Activated naive CD4-positive, alpha-beta T cell treated with anti-CD3 and anti-CD28 coated beads for 36 hours (primary cell): ENCODE measurements at regions of chr19 and their contacts with region 1.

Region 1: DNA sequence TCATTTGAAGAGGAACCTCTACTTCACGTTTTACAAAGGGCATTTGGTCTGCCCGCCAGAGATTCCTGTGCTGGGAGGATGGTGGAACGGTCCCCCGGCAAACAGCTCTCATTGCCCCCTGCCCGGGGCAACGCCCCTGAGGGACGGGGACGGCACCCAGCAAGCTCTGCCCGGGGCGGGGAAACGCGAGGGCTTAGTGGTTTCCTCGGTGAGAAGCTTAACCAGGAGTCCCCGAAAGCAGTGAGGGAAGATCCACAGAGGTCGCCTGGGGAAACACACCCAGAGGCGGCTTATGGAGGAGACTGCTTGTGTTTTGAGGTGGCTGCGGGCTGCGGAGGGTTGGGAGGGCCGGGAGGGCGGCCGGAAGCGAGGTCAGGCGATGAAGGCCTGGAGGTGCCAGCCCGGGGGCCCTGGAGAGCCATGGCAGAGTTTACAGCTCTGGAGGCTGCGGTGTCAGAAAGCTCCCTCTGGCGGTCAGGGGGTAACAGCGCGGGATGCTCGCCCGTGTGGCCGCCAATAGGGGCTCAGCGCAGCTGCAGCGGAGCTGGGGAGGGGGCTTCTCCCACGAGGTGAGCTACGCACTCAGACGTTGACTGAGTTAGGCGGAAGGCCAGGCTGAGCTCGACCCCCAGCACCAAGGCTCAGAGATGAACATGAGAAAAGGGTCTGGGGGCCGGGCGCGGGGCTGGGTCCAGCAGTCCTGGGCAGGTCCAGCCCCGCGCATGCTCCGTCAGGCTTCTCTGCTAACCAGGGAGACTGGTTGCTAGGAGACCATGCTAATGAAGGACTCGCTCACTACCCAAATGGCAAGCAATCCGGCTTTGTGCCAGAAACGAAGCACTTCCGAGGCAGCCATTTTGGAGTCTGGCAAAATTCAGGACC is 652 bp upstream of the TPGS1 start:
- DNase-seq: peak; percentile 96
- H3K4me3 Mint-ChIP-seq: peak overlapping the region; percentile 83
- H3K27ac Mint-ChIP-seq: peak overlapping the region; percentile 99
- H3K4me1 Mint-ChIP-seq: peaks cover 38% of the 10 kb centered on the region
- H3K27me3 Mint-ChIP-seq: no peaks in the 10 kb centered on the region

Region 2: DNA sequence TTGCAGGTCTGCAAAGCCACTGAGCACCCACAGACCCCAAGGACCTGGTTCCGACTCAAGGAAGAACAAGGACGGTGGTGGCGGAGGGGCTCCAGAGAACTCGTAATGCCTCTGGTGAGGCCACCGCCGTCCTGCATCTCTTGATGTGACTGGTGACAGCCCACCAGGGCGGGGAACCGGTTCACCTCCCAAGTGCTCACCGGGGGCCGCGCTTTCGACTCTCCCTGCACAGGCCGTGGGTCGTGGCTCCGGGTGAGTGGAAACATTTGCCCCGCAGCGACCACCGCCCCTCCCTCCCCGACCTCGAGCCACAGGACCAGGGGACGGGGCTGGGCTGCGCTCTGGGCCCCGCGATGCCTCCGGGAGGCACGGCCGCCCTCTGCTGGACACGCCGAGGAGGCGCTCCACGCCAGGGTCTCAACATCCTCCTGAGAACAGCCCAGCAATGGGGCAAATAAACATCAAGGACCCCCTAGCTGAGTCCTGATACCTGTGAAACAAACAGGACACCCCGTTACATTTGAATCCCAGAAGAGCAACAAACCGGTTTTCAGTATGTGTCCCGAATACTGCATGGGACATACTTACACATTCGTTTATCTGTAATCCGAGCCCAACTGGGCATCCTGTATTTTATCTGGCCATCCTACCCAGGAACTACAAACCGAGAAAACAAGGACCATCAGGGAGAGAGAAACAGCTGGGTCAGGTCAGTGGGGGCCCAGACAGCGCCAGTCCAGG is 211.5 kb before region 1 on chr19:
- CTCF ChIA-PET with region 1: no interaction called
- intact Hi-C with region 1: loop called (anchors 2 kb)
- DNase-seq: peak; percentile 55
- H3K4me3 Mint-ChIP-seq: no peak overlapping the region
- H3K27ac Mint-ChIP-seq: no peak overlapping the region
- H3K4me1 Mint-ChIP-seq: peaks cover 10% of the 10 kb centered on the region
- H3K27me3 Mint-ChIP-seq: peaks cover 28% of the 10 kb centered on the region

Region 3: DNA sequence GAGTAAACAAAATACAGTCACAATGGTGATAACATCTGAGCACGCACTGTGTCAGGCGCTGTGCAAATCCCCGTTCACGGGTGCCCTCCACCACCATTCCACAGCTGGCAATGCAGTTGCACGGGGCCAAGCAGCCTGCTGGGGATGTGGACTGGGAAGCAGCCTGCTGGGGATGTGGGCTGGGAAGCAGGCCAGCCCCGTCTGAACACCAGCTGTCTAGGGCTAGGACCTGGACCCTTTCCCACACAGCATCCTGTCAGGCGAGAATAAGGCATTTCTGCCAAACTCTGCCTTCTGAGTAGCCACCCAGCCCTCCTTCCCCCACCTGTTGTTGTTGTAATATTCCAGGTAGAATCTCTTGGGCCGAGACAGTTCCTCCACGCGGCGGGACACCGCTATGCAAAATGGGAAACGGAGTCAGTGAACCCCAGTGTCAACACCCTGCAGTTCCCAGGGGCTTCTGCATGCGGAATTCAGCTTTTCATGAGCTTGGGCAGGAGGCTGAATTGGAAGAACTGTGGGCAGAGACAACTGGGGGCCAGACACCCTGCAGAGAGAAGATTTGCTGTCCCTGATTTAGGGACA is 134.2 kb before region 1 on chr19:
- CTCF ChIA-PET with region 1: no interaction called
- intact Hi-C with region 1: no loop called
- DNase-seq: no peak
- H3K4me3 Mint-ChIP-seq: no peak overlapping the region
- H3K27ac Mint-ChIP-seq: no peak overlapping the region
- H3K4me1 Mint-ChIP-seq: no peaks in the 10 kb centered on the region
- H3K27me3 Mint-ChIP-seq: peaks cover 13% of the 10 kb centered on the region

Region 4: DNA sequence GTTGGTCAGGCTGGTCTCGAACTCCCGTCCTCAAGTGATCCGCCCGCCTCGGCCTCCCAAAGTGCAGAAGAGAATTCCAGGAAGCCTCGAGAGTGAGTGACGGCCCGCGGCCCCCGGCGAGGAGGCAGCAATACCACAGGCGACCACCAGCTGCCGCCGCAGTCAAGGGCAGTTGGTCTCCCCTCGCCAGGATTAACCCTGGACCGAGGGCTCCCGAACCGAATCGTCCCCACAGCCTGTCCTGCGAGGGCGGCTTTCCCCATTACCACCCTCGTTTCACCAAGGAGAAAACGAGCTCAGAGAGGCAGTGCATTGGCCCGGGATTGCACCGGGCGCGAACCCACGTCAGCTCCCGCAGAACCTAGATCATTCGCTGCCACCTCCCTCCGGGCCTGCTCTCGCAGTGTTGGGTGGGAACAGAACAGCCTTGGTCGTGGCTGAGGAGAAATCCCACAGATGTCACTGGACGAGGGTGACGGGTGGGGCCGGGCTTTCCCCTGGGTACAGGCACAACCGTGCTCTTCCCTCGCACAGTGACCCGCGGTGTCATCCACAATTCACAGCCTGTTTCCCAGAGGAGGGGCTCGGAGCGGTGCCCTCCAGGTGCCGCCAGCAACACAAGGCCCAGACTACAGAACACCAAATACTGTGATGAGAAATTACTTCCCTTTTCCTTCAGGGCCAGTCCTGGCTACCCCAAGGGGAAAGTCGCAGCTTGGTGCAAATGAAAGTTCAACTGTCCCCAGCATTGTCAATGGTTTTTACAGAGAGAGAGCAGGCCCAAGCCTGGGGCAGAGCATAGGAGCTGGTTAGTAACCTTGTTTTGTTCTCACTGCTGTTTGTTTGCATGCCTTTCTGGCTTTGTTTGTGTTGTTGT is 122.5 kb before region 1 on chr19:
- CTCF ChIA-PET with region 1: interaction called, 11 read pairs
- intact Hi-C with region 1: loop called (anchors 2 kb)
- DNase-seq: peak; percentile 22
- H3K4me3 Mint-ChIP-seq: no peak overlapping the region
- H3K27ac Mint-ChIP-seq: no peak overlapping the region
- H3K4me1 Mint-ChIP-seq: peaks cover 28% of the 10 kb centered on the region
- H3K27me3 Mint-ChIP-seq: peaks cover 40% of the 10 kb centered on the region

Region 5: GRCh38 chr19:495402-496186 is 11.1 kb before region 1 on chr19:
- CTCF ChIA-PET with region 1: interaction called, 10 read pairs
- intact Hi-C with region 1: no loop called
- DNase-seq: peak; percentile 56
- H3K4me3 Mint-ChIP-seq: no peak overlapping the region
- H3K27ac Mint-ChIP-seq: no peak overlapping the region
- H3K4me1 Mint-ChIP-seq: peaks cover 9% of the 10 kb centered on the region
- H3K27me3 Mint-ChIP-seq: peaks cover 20% of the 10 kb centered on the region

Region 6: DNA sequence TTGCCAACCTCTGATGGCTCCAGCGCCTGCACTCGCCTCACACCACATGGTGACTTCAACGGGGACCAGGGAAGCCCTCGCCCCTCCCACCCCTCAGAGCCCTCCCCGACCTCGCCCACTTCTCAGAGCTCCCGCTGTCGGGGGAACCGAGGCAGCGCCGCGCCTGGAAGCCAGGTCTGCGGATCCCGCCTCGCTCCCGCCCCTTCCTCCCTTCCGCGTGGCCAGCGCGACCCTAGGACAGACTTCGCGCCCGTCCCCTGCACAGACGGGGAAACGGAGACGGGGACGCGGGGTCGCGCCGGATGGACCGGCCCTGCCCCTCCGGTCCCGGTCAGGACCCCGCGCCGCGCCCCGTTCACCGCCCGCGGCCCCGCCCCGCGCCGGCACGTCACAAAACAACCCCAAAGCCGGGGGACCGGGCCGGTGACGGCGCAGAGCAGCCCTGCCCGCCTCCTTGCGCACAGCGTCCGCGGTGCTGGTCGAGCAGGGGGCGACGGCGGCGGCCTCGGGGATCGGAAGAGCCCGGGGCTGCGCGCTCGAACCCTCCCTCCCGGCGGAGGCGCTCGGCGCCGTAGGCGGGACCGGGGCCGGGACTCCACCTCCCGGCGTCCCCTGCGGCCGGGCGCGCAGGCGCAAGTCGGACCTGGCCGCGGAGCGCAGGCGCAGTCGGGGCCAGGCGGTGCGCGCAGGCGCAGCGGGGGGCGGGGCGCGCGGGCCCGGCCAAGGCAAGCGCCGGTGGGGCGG is 24.5 kb after region 1 on chr19:
- CTCF ChIA-PET with region 1: interaction called, 32 read pairs
- intact Hi-C with region 1: loop called (anchors 1 kb)
- DNase-seq: peak; percentile 82
- H3K4me3 Mint-ChIP-seq: peak overlapping the region; percentile 77
- H3K27ac Mint-ChIP-seq: peak overlapping the region; percentile 77
- H3K4me1 Mint-ChIP-seq: peaks cover 26% of the 10 kb centered on the region
- H3K27me3 Mint-ChIP-seq: peaks cover 3% of the 10 kb centered on the region

Region 7: GRCh38 chr19:633068-633785 is 126.6 kb after region 1 on chr19 and contains the start of gene POLRMT:
- CTCF ChIA-PET with region 1: no interaction called
- intact Hi-C with region 1: loop called (anchors 1 kb)
- DNase-seq: peak; percentile 98
- H3K4me3 Mint-ChIP-seq: peak within 1 kb of the TSS; percentile 93
- H3K27ac Mint-ChIP-seq: peak within 1 kb of the TSS; percentile 78
- H3K4me1 Mint-ChIP-seq: peaks cover 37% of the 10 kb centered on the region
- H3K27me3 Mint-ChIP-seq: no peaks in the 10 kb centered on the region
- total RNA-seq, gene POLRMT: 63.8 to 65.6 TPM